ENCODE measurements at regions of chr13 and their contacts with region 1.

Region 1: DNA sequence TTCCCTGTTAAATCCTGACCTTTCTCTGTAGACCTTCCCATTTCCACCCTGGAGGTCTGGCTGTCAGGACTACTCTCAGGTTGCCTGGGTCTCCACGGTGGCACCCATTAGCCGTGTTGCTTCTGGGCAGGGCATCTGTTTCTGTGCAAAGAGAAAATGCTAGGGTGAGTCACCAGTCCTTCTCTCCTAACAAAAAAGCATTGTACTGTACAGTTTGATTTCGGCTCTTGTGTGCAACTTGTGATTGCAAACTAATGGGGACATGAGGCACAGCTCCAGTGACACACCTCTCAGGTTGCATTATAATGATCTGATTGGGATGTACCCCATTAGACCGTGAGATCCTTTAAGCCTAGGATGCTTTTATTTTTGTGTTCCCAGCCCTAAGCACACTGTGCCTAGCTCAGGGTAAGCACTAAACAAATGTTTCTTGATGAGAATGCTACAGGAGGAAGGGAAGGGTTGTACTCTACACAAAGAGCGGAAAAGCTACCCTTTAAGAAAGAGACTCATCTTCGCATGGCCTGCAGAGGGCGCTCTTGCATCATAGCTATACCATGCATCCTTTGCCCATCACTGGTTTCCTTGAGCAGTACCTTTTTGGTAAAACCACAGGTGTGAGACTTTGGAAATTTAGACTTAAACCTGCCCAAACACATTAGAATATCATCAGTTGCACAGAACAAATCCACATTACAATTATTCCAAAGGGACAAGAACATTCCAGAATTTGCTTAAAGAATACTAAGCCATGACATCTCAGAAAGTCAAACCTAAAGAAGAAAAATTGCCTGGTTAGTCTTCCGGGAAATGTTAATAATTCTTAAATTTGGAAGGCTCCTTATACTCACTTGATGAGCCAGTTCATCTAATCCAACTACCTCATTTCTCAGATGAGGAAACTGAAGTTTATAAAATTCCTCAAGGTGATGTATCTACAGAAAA is 20.3 kb upstream of the TRIM13 start:
- DNase-seq: peak; percentile 57 to 71
- ATAC-seq: peak; percentile 64 to 85 (median 80)
- H3K4me3 ChIP-seq: no peak overlapping the region
- H3K27ac ChIP-seq: no peak overlapping the region
- H3K4me1 ChIP-seq: peaks cover 0 to 5% (median 0%) of the 10 kb centered on the region in 9 donors
- H3K27me3 ChIP-seq: no peaks in the 10 kb centered on the region
- CTCF ChIP-seq: peak; percentile 71 to 94 (median 87)

Region 2: DNA sequence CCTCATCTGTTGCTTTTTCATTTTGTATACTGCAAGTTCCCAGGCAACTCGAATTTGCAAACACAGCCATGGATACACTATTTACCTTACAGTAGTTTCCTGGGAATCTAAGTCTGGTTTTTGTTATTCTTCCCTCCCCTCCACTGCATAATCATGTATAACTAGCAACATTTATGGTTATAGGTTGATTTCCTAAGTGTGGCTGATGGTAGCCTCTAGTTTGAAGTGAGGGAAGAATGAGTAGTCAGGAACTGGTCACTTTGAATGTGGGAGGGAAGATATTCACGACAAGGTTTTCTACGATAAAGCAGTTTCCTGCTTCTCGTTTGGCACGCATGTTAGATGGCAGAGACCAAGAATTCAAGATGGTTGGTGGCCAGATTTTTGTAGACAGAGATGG is 38.7 kb after region 1 on chr13 and contains the start of gene KCNRG:
- intact Hi-C with region 1: no loop called
- DNase-seq: no peak
- ATAC-seq: peak in 4 of 8 donors; percentile 14 to 34 (median 21)
- H3K4me3 ChIP-seq: no peak within 1 kb of the TSS
- H3K27ac ChIP-seq: peak within 1 kb of the TSS; percentile 9 to 83 (median 62)
- H3K4me1 ChIP-seq: peaks cover 0 to 46% (median 34%) of the 10 kb centered on the region in 9 donors
- H3K27me3 ChIP-seq: no peaks in the 10 kb centered on the region
- CTCF ChIP-seq: no peak
- total RNA-seq, gene KCNRG: 0.19 to 0.86 (median 0.29) TPM in 6 of 10 donors, not detected in the others

Region 3: DNA sequence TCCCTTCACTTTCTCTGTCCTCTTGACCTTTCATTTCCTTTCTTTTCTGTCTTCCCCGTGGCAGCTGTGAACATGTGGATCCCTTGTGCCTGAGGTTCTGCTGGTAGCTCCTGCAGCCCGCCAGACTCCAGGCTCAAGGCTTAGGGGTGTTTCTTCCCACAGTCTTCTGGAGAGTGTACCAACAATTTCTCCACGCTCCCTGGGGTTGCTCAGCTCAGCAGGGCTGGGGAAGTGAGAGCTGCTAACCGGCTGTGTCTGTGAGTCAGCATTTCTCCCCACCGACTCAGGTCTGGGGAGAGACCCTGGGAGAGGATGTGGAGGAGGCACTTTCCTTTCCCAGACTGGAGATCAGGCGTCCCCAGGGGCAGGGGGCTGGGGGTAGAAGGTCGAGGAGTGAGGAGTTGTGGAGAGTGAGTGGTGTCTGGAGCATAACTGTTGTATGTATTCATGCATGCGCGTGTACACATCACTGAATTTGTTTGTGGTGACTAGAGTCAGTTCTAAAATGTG is 232.3 kb after region 1 on chr13:
- intact Hi-C with region 1: no loop called
- DNase-seq: peak; percentile 41 to 54
- ATAC-seq: peak; percentile 90 to 94 (median 92)
- H3K4me3 ChIP-seq: peak overlapping the region in 7 of 10 donors; percentile 2 to 38 (median 36)
- H3K27ac ChIP-seq: peak overlapping the region in 7 of 10 donors; percentile 36 to 80 (median 60)
- H3K4me1 ChIP-seq: peaks cover 0 to 19% (median 14%) of the 10 kb centered on the region in 9 donors
- H3K27me3 ChIP-seq: no peaks in the 10 kb centered on the region
- CTCF ChIP-seq: no peak

Region 4: DNA sequence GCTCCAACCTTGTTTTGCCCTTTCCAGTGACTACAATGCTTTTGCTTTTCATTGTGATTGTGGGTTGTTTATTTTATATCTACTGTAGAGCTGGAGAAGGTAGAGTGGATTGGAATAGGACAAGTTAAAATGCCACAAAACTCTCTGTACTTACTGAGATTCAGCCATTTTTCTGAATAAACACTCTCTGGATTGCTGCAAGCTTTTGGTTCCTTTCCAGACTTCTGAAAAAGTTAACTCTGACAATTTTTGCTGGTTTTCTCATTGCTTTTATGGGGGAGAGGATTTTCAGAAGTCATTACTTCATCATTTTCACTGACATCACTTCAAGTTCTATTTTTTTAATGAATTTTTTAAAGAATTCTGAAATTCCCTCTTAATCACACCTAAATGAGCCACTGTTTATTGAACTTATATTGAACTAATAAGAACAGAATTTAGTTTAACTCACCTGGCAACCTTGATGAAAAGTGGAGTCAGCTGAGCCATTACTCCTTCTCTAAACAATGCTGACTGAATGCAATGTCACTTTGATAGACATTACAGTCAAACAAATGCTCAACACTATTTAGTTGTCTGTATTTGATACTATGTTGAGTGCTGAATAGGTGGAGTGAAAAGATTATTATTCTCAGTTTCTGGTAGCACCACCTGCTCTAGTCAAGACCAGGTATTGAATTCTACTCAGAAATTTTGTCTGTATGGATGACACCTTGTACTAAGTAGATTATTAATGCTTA is 563.4 kb after region 1 on chr13:
- intact Hi-C with region 1: loop called in 1 of 10 experiments (anchors 5 kb)
- DNase-seq: no peak
- ATAC-seq: no peak
- H3K4me3 ChIP-seq: no peak overlapping the region
- H3K27ac ChIP-seq: no peak overlapping the region
- H3K4me1 ChIP-seq: no peaks in the 10 kb centered on the region
- H3K27me3 ChIP-seq: no peaks in the 10 kb centered on the region
- CTCF ChIP-seq: no peak

Region 5: DNA sequence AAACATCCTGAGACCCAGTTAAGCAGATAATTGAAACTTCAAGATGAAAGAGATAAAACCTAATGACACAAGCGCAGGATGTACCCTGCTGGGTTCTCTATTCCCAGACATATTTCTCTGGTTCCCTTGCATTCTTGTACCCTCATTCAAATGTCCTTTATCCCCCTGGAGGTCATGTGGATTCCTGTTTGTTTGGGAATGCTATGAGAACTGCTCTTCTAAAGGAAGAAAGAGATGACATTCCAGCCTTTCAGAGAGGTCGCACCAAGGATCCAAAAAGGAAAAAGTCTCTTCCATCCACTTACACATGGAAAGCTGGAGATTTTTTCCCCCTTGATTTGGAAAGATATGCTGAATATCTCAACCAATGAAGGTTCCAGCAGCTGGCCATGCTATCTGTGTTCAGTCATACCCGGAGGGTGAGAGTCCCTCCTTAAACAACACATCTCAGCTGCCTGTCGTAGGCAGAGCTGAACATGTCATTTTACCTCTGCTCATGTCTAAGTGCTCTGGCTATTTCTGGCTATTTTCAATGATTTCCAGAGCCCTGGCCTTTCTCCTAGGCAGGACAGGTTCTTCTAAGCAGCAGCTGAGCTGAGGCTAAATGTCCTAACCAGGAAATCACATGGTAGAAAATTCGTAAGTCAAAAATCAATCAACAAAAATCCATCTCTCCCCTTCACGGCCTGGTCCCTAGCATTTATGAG is 1082.0 kb after region 1 on chr13:
- intact Hi-C with region 1: loop called in 2 of 10 experiments (anchors 10 kb)
- DNase-seq: no peak
- ATAC-seq: no peak
- H3K4me3 ChIP-seq: no peak overlapping the region
- H3K27ac ChIP-seq: no peak overlapping the region
- H3K4me1 ChIP-seq: peaks cover 0 to 3% (median 0%) of the 10 kb centered on the region in 9 donors
- H3K27me3 ChIP-seq: no peaks in the 10 kb centered on the region
- CTCF ChIP-seq: no peak